Activated CD4-positive, alpha-beta T cell treated with anti-CD3 and anti-CD28 coated beads for 36 hours (primary cell): ENCODE measurements at regions of chr14 and their contacts with region 1.

Region 1: GRCh38 chr14:53190938-53191337 is 37.8 kb upstream of the DDHD1 start:
- DNase-seq: peak; percentile 83
- ATAC-seq: peak; percentile 96
- H3K4me3 Mint-ChIP-seq: peak overlapping the region; percentile 30
- H3K27ac Mint-ChIP-seq: peak overlapping the region; percentile 74
- H3K4me1 Mint-ChIP-seq: peaks cover 28% of the 10 kb centered on the region
- H3K27me3 Mint-ChIP-seq: peaks cover 2% of the 10 kb centered on the region

Region 2: GRCh38 chr14:52918486-52918885 is 272.5 kb before region 1 on chr14:
- CTCF ChIA-PET with region 1: no interaction called
- POLR2A ChIA-PET with region 1: no interaction called
- intact Hi-C with region 1: loop called in 1 of 2 experiments (anchors 10 kb)
- DNase-seq: peak; percentile 30
- ATAC-seq: peak; percentile 98
- H3K4me3 Mint-ChIP-seq: no peak overlapping the region
- H3K27ac Mint-ChIP-seq: peak overlapping the region; percentile 31
- H3K4me1 Mint-ChIP-seq: peaks cover 25% of the 10 kb centered on the region
- H3K27me3 Mint-ChIP-seq: no peaks in the 10 kb centered on the region

Region 3: GRCh38 chr14:53109105-53110041 is 81.6 kb before region 1 on chr14:
- CTCF ChIA-PET with region 1: interaction called, 5 read pairs
- POLR2A ChIA-PET with region 1: interaction called, 13 read pairs
- intact Hi-C with region 1: loop called in 1 of 2 experiments (anchors 1 kb)
- DNase-seq: peak; percentile 79
- ATAC-seq: peak; percentile 88
- H3K4me3 Mint-ChIP-seq: no peak overlapping the region
- H3K27ac Mint-ChIP-seq: no peak overlapping the region
- H3K4me1 Mint-ChIP-seq: peaks cover 25% of the 10 kb centered on the region
- H3K27me3 Mint-ChIP-seq: no peaks in the 10 kb centered on the region

Region 4: GRCh38 chr14:53180268-53181221 is 10.4 kb before region 1 on chr14:
- CTCF ChIA-PET with region 1: interaction called, 5 read pairs
- POLR2A ChIA-PET with region 1: no interaction called
- intact Hi-C with region 1: loop called (anchors 1 kb)
- DNase-seq: peak; percentile 61
- ATAC-seq: peak; percentile 73
- H3K4me3 Mint-ChIP-seq: no peak overlapping the region
- H3K27ac Mint-ChIP-seq: peak overlapping the region; percentile 71
- H3K4me1 Mint-ChIP-seq: peaks cover 39% of the 10 kb centered on the region
- H3K27me3 Mint-ChIP-seq: peaks cover 2% of the 10 kb centered on the region

Region 5: DNA sequence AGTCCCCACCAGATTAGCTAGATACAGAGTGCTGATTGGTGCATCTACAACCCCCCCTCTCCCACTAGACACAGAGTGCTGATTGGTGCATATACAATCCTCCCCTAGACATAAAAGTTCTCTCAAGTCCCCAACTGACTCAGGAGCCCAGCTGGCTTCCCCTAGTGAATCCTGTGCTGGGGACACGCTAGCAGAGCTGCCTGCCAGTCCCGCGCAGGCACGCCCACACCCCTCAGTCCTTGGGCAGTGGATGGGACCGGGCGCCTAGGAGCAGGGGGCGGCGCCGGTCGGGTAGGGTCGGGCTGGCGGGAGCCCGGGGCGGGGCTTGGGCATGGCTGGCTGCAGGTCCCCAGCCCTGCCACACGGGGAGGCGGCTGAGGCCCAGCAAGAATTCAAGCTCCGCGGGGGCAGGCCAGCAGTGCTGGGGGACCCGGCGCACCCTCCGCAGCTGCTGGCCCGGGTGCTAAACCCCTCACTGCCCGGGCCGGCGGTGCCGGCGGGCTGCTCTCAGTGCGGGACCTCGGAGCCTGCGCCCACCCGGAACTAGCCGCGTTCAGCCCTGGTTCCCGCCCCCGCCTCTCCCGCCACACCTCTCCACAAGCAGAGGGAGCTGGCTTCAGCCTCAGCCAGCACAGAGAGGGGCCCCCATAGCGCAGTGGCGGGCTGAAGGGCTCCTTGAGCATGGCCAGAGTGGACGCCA is 26.5 kb after region 1 on chr14:
- CTCF ChIA-PET with region 1: no interaction called
- POLR2A ChIA-PET with region 1: interaction called, 3 read pairs
- intact Hi-C with region 1: loop called in 1 of 2 experiments (anchors 1 kb)
- DNase-seq: peak; percentile 90
- ATAC-seq: peak; percentile 98
- H3K4me3 Mint-ChIP-seq: peak overlapping the region; percentile 74
- H3K27ac Mint-ChIP-seq: peak overlapping the region; percentile 83
- H3K4me1 Mint-ChIP-seq: peaks cover 5% of the 10 kb centered on the region
- H3K27me3 Mint-ChIP-seq: no peaks in the 10 kb centered on the region